Heart left ventricle (tissue), 16 donors: ENCODE measurements at regions of chr6 and their contacts with region 1.

Region 1: GRCh38 chr6:129709769-129710449 is at the start of gene ARHGAP18:
- DNase-seq: peak; percentile 90 to 94 (median 92)
- ATAC-seq: peak; percentile 95 to 99 (median 98)
- H3K4me3 ChIP-seq: peak within 1 kb of the TSS; percentile 29 to 83 (median 62)
- H3K27ac ChIP-seq: peak within 1 kb of the TSS; percentile 60 to 89 (median 76)
- H3K4me1 ChIP-seq: peaks cover 0 to 61% (median 18%) of the 10 kb centered on the region in 12 donors
- H3K27me3 ChIP-seq: no peaks in the 10 kb centered on the region
- CTCF ChIP-seq: no peak
- POLR2A ChIP-seq: peak; percentile 28 to 82
- total RNA-seq, gene ARHGAP18: 2.8 to 26.4 (median 4.1) TPM

Region 2: DNA sequence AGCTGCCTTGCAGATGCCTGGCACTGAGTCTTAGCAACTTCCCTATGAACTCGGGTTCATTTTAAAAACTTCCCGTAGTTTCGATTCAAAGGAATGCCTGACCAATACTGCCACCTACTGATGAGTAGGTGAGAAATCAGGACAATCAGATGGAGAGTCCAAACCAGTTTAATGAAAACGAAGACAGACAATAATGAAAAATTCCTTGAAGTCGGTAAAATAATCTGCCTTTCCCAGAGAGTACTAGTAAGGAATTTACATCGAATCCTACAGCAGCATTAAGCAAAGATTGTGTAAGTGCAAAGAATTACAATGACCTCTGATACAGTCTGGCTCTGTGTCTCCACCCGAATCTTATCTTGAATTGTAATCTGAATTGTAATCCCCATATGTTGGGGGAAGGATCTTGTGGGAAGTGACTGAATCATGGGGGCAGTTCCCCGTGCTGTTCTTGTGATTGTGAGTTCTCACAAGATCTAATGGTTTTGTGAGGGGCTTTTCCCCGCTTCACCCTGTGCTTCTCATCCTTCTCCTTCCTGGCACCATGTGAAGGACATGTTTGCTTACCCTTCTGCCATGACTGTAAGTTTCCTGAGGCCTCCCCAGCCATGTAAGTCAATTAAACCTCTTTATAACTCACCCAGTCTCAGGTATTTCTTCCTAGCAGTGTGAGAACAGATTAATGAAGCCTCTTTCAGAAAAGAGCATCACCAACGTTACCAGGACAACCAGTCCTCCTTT is 134.4 kb before region 1 on chr6:
- intact Hi-C with region 1: no loop called
- DNase-seq: no peak
- ATAC-seq: peak; percentile 47 to 72 (median 70)
- H3K4me3 ChIP-seq: peak overlapping the region in 9 of 12 donors; percentile 11 to 47 (median 30)
- H3K27ac ChIP-seq: peak overlapping the region in 1 of 12 donors; percentile 23
- H3K4me1 ChIP-seq: peaks cover 0 to 8% (median 0%) of the 10 kb centered on the region in 12 donors
- H3K27me3 ChIP-seq: no peaks in the 10 kb centered on the region
- CTCF ChIP-seq: peak; percentile 56 to 82 (median 66)
- POLR2A ChIP-seq: no peak

Region 3: GRCh38 chr6:129621247-129621646 is 88.7 kb before region 1 on chr6:
- intact Hi-C with region 1: loop called in 1 of 10 experiments (anchors 5 kb)
- DNase-seq: no peak
- ATAC-seq: no peak
- H3K4me3 ChIP-seq: no peak overlapping the region
- H3K27ac ChIP-seq: no peak overlapping the region
- H3K4me1 ChIP-seq: no peaks in the 10 kb centered on the region
- H3K27me3 ChIP-seq: no peaks in the 10 kb centered on the region
- CTCF ChIP-seq: peak in 9 of 12 donors; percentile 7 to 39 (median 25)
- POLR2A ChIP-seq: no peak

Region 4: DNA sequence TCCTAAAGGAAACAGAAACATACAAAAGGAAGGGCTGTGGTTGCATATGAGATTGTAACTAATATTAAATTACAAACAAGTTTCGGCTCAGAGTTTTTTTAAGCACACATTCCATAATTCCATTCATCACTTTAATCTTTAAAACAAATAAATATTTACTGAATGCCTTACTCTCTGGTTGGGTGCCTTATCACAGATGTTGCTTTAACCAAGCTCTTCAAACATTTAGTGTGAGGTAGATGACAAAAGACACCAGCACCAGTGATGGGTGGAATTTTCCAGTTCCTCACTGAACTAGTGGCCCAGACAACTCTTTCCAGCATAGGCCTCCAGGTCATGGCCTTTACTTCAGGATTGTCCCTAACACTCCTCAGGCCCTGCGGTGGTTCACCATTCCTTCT is 58.6 kb before region 1 on chr6:
- intact Hi-C with region 1: loop called in 1 of 10 experiments (anchors 5 kb)
- DNase-seq: no peak
- ATAC-seq: no peak
- H3K4me3 ChIP-seq: no peak overlapping the region
- H3K27ac ChIP-seq: peak overlapping the region in 9 of 12 donors; percentile 2 to 47 (median 27)
- H3K4me1 ChIP-seq: peaks cover 0 to 27% (median 9%) of the 10 kb centered on the region in 12 donors
- H3K27me3 ChIP-seq: no peaks in the 10 kb centered on the region
- CTCF ChIP-seq: no peak
- POLR2A ChIP-seq: no peak

Region 5: GRCh38 chr6:129661536-129662405 is 48.1 kb before region 1 on chr6:
- intact Hi-C with region 1: loop called in 2 of 10 experiments (anchors 5 kb)
- DNase-seq: no peak
- ATAC-seq: no peak
- H3K4me3 ChIP-seq: no peak overlapping the region
- H3K27ac ChIP-seq: no peak overlapping the region
- H3K4me1 ChIP-seq: peaks cover 0 to 38% (median 8%) of the 10 kb centered on the region in 12 donors
- H3K27me3 ChIP-seq: no peaks in the 10 kb centered on the region
- CTCF ChIP-seq: no peak
- POLR2A ChIP-seq: no peak

Region 6: DNA sequence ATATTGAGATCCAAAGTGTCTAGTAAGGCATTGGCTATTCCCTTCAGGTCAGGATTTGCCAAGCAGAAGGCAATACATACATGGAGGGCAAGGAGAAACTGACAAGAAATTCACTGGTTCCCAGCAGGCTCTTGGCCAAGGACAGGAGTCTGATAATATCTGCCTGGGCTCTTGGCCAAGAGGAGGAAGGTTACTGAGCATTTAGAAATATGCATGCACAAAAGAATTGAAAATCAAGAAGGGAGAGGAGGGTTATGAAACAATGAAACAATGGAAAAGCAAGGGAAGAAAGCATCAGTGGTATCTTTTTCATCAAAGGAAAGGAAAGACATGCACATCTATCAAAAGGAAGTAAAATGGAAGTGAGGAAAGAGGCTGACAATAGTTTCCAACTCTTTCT is 42.3 kb before region 1 on chr6:
- intact Hi-C with region 1: loop called in 3 of 10 experiments (anchors 5 kb)
- DNase-seq: peak in 1 of 5 donors; percentile 33
- ATAC-seq: no peak
- H3K4me3 ChIP-seq: no peak overlapping the region
- H3K27ac ChIP-seq: no peak overlapping the region
- H3K4me1 ChIP-seq: peaks cover 0 to 43% (median 23%) of the 10 kb centered on the region in 12 donors
- H3K27me3 ChIP-seq: no peaks in the 10 kb centered on the region
- CTCF ChIP-seq: no peak
- POLR2A ChIP-seq: no peak

Region 7: DNA sequence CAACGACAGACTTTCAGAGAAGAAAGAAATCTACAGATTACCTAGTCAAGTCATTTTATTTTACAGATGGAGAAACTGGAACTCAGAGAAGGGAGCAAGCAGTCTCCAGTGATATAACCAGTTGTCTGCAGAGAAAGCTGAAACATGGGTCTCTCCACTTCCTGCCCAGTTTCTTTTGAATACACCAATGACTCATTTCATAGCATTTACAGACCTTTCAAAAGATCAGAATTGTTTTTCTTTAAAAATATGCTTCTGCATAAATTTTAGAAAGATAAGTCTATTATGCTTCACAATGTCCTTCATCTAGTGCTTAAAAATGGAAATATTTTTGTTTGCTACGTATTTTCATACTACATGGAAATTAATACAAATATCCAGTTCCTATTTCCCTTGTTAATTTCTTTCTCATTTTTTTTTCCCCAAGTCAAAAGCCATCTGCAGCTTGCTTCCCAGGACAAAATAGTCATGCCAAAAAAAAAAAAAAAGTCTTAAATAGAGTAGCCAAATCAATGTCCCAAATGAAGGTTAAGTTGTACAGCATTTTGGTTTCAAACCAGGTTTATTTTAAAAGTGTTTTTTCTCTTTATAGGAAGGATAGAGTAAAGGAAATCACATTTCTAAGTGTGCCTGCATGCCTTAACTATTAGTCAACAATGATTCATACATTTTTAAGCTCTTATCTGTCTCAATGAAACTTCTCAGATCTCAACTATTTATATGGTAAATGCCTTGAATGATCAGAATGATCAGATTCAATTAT is 36.8 kb before region 1 on chr6:
- intact Hi-C with region 1: loop called in 2 of 10 experiments (anchors 5 kb)
- DNase-seq: no peak
- ATAC-seq: peak; percentile 47 to 85 (median 68)
- H3K4me3 ChIP-seq: peak overlapping the region in 2 of 12 donors; percentile 5 to 13
- H3K27ac ChIP-seq: peak overlapping the region; percentile 19 to 90 (median 58)
- H3K4me1 ChIP-seq: peaks cover 0 to 51% (median 22%) of the 10 kb centered on the region in 12 donors
- H3K27me3 ChIP-seq: no peaks in the 10 kb centered on the region
- CTCF ChIP-seq: no peak
- POLR2A ChIP-seq: no peak